Activated CD4-positive, alpha-beta T cell treated with anti-CD3 and anti-CD28 coated beads, Interleukin-2, amount 10 ng/mL, durations not matched to agents 24 days and 14 days (primary cell): ENCODE measurements at regions of chr18 and their contacts with region 1.

Region 1: DNA sequence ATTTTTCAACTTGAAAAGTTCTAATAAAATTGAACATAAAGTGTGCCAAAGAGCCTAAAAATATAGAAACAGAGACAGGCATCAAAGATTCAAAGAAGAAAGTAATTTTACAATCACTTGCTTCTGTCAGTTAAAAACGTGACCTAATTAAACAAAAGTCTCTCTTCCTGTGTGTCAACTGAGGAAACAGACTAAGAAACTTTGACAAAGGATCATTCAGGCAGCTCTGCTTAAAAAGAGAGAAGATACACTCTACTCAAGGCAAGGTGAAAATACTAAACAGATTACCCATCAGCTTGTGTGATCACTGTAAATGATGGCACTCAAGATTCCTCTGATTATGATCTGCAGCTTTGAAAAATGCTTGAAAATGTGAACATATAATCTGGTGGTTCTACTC is 47.8 kb downstream of the DYM start:
- DNase-seq: no peak
- H3K4me3 Mint-ChIP-seq: peak overlapping the region; percentile 42
- H3K27ac Mint-ChIP-seq: peak overlapping the region; percentile 66
- H3K4me1 Mint-ChIP-seq: peaks cover 29% of the 10 kb centered on the region
- H3K27me3 Mint-ChIP-seq: no peaks in the 10 kb centered on the region

Region 2: GRCh38 chr18:49249521-49249920 is 163.2 kb before region 1 on chr18:
- intact Hi-C with region 1: loop called (anchors 10 kb)
- DNase-seq: no peak
- H3K4me3 Mint-ChIP-seq: no peak overlapping the region
- H3K27ac Mint-ChIP-seq: no peak overlapping the region
- H3K4me1 Mint-ChIP-seq: peaks cover 3% of the 10 kb centered on the region
- H3K27me3 Mint-ChIP-seq: no peaks in the 10 kb centered on the region

Region 3: GRCh38 chr18:49381267-49381850 is 31.3 kb before region 1 on chr18:
- intact Hi-C with region 1: loop called (anchors 2 kb)
- DNase-seq: no peak
- H3K4me3 Mint-ChIP-seq: no peak overlapping the region
- H3K27ac Mint-ChIP-seq: no peak overlapping the region
- H3K4me1 Mint-ChIP-seq: no peaks in the 10 kb centered on the region
- H3K27me3 Mint-ChIP-seq: no peaks in the 10 kb centered on the region